Sciatic nerve (tissue), 2 donors: ENCODE measurements at regions of chr7 and their contacts with region 1.

Region 1: GRCh38 chr7:9671979-9672917 is 1238.8 kb downstream of the NXPH1 start:
- DNase-seq: no peak
- ATAC-seq: no peak

Region 2: DNA sequence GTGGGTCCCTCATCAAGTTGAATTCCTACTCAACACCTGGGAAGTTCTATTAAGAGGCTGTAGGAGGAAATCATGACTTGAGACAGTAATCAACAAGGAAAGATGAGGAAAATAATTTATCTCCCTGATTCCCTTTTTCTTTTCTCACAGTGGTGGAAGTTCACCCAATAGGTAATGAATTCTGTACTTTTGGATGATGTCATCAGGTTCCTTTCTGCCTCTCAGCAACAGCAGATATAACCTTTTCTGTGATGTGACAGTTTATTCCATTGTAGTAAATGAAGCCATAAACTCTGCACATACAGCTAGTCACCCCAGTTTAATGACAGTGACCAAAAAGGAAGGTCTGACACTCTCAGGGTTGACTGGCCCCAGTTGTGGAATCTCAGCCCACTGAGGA is 26.1 kb after region 1 on chr7:
- intact Hi-C with region 1: loop called (anchors 2 kb)
- DNase-seq: no peak
- ATAC-seq: no peak